ENCODE measurements at regions of chr3 and their contacts with region 1.

Region 1: GRCh38 chr3:171772427-171773056 is 37.7 kb downstream of the PLD1 start:
- DNase-seq: no peak
- H3K4me3 ChIP-seq: no peak overlapping the region
- CTCF ChIP-seq: peak; percentile 59

Region 2: DNA sequence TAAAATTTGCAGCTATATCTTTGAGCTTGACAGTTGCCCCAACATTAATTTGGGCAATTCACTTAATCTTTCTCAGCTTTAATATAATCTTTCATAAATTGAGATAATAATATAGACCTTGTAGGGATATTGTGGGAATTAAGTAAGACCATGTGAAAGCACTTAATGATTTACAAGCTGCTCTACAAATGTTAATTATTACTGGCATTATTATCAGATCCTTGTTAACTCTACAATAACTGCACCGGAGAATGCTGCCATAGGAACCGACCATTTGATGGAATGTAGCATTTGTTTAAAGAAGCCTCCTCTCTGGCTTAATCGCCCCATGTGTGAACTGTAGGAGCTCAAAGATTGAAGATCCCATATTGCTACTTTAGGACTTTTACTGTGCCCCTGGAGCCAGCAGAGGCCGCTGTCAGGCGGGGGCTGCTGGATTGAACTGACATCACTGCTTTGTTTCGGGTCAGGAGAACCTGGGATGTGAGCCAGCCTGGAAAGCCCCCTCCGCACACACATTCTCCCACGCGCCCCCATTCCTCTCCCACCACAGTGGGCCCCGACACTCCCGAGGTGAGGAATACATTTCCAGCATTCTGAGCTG is 158.1 kb before region 1 on chr3:
- CTCF ChIA-PET with region 1: interaction called, 31 read pairs
- POLR2A ChIA-PET with region 1: no interaction called
- DNase-seq: no peak
- H3K4me3 ChIP-seq: no peak overlapping the region
- CTCF ChIP-seq: peak; percentile 44

Region 3: DNA sequence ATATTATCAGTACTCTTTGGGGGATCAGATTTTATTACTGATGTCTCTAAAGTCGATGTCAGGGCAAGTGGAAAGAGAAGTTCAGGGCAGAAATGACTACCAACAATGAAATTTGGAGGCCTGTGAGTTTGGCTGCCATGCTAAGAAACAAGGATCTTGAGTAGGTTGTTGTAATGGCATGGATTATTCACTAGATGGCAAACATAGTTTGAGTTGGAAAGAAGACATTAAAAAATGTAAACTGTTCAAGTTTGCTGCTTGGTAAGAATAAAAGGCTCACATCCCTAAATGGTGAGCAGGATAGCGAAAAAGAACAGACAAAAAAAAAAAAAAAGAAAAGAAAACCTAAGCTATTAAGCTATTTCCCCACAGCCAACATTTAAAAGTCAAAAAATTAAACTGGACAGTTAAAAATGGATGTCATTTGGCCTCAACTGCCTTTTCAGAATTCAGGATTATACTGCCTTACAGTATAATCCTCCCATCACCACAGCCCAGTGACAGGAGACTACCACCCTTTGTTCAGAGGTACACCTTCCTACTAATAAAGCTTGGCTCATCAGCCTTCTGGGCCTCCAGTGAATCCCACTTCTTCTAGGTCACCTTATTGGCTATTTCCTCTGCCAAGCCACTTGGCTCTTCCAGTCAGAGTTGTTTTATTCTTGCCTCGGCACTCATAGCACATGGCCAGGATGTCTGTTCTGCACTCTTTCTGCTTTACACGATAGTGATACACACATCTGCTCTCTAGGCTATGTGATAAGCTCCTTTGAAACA is 126.0 kb before region 1 on chr3:
- CTCF ChIA-PET with region 1: interaction called, 173 read pairs
- POLR2A ChIA-PET with region 1: no interaction called
- DNase-seq: peak; percentile 46
- H3K4me3 ChIP-seq: no peak overlapping the region
- CTCF ChIP-seq: peak; percentile 37

Region 4: GRCh38 chr3:171703756-171704401 is 68.7 kb before region 1 on chr3:
- CTCF ChIA-PET with region 1: interaction called, 33 read pairs
- POLR2A ChIA-PET with region 1: no interaction called
- DNase-seq: no peak
- H3K4me3 ChIP-seq: no peak overlapping the region
- CTCF ChIP-seq: peak; percentile 57

Region 5: GRCh38 chr3:171743327-171744157 is 29.0 kb before region 1 on chr3:
- CTCF ChIA-PET with region 1: interaction called, 13 read pairs
- POLR2A ChIA-PET with region 1: no interaction called
- DNase-seq: no peak
- H3K4me3 ChIP-seq: no peak overlapping the region
- CTCF ChIP-seq: no peak

Region 6: DNA sequence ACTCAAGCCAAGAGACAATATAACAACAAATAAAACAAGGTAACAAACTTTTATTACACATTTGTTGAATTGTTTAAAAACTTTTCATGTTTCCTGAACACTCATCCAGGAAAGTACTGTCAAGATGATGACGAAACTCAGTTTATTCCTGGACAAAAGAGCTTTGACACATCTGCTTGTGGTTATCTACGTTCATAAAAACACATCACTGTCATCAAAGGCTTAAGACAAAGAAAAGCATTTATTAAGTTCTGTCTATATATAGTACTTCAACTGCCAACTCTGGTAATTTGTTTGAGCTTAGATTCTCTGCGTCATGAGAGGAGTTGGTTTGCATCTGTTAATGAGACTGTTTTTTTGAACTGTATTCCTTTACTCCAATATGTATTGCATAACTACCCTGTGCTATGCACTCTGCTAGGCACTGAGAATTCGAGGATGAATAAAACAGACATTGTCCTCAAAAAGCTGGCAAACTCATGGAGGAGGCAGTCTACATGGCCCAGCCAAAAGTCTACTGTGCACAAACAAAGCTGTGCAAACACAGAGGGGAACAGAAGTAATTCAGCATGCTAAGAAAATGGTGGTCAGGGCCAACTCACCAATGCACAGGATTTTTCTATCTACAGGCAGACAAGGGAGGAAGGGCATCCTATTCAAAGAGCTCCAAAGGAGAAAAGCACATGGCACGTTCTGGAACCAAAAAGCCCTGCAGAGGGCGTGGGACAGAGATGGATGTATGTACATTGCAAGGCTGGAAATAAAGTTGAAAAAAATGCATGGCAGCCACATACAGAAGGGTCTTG is 16.2 kb after region 1 on chr3:
- CTCF ChIA-PET with region 1: interaction called, 52 read pairs
- POLR2A ChIA-PET with region 1: no interaction called
- DNase-seq: peak; percentile 76
- H3K4me3 ChIP-seq: no peak overlapping the region
- CTCF ChIP-seq: no peak

Region 7: GRCh38 chr3:172082269-172082668 is 309.7 kb after region 1 on chr3:
- CTCF ChIA-PET with region 1: no interaction called
- POLR2A ChIA-PET with region 1: no interaction called
- DNase-seq: peak; percentile 95
- H3K4me3 ChIP-seq: no peak overlapping the region
- CTCF ChIP-seq: no peak

Measured in AG04449 (cell line).